ENCODE measurements at regions of chr13 and their contacts with region 1.

Region 1: DNA sequence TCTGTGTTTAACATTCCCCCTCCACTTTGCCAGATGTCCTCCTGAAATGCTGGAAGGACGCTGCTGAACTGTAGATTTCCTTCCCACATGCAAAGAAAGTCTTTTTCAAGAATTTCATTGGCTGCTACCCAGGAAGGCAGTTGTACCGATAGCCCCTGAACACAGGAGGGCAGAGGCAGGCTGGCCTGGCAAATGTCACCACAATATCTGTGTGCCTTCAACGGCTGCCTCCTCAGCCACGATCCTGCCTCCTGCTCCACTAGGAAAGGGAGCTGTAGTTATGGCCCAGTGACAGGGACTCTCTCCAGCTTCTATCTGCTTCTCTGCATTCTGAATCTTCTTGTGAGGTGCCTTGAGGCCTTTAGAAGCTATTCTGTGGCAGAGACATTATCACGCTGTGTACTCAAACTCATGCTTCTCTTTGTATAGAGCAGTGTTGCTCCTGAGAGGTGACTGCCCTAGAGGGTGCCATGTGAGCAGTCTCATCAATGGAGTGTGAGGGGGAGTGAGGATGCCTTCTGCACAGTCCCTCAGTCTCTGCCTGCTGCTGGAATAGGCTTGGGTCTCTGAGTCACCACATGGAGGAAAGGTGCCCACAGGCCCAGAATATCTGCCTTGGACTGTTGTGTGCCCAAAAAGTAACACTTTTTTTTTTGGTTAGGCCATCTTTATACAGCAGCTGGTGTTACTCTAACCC is 279.8 kb downstream of the DNAJC15 start:
- DNase-seq: peak; percentile 72 to 75
- H3K4me3 ChIP-seq: no peak overlapping the region
- H3K4me3 Mint-ChIP-seq: no peak overlapping the region
- H3K27ac Mint-ChIP-seq: no peak overlapping the region
- H3K4me1 ChIP-seq: no peaks in the 10 kb centered on the region
- H3K4me1 Mint-ChIP-seq: peaks cover 22% of the 10 kb centered on the region
- H3K27me3 ChIP-seq: no peaks in the 10 kb centered on the region
- H3K27me3 Mint-ChIP-seq: no peaks in the 10 kb centered on the region
- CTCF ChIP-seq: peak; percentile 59 to 85

Region 2: DNA sequence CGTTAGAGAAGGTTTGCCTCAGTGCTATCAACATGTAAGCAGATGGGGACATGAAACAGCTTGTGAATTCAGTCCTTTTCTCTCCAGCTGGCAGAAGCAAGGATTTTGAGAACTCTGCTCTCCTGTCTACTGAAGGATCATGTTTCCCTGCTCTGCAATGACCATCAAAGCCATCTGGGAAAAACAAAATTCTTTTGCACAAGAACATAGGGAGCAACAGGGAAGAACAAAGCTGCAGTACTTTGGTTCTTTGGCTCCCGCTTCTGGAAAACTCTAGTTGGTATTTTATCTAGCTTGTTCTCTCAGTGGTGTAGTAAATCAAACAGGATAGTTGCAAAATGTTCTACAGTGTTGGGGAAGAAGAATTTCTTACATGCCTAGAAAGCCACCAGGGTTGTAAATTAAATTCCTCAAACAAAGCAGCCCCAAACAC is 213.2 kb after region 1 on chr13:
- CTCF ChIA-PET with region 1: no interaction called
- POLR2A ChIA-PET with region 1: no interaction called
- intact Hi-C with region 1: loop called (anchors 5 kb)
- DNase-seq: peak; percentile 41 to 67
- H3K4me3 ChIP-seq: no peak overlapping the region
- H3K4me3 Mint-ChIP-seq: peak overlapping the region; percentile 24
- H3K27ac Mint-ChIP-seq: peak overlapping the region; percentile 86
- H3K4me1 ChIP-seq: peaks cover 30% of the 10 kb centered on the region
- H3K4me1 Mint-ChIP-seq: peaks cover 30% of the 10 kb centered on the region
- H3K27me3 ChIP-seq: no peaks in the 10 kb centered on the region
- H3K27me3 Mint-ChIP-seq: no peaks in the 10 kb centered on the region
- CTCF ChIP-seq: no peak

Region 3: GRCh38 chr13:43664700-43665191 is 361.6 kb after region 1 on chr13:
- CTCF ChIA-PET with region 1: no interaction called
- POLR2A ChIA-PET with region 1: no interaction called
- intact Hi-C with region 1: loop called (anchors 5 kb)
- DNase-seq: peak; percentile 65 to 72
- H3K4me3 ChIP-seq: no peak overlapping the region
- H3K4me3 Mint-ChIP-seq: no peak overlapping the region
- H3K27ac Mint-ChIP-seq: no peak overlapping the region
- H3K4me1 ChIP-seq: peaks cover 61% of the 10 kb centered on the region
- H3K4me1 Mint-ChIP-seq: peaks cover 38% of the 10 kb centered on the region
- H3K27me3 ChIP-seq: no peaks in the 10 kb centered on the region
- H3K27me3 Mint-ChIP-seq: no peaks in the 10 kb centered on the region
- CTCF ChIP-seq: no peak

Region 4: GRCh38 chr13:43786773-43787517 is 483.8 kb after region 1 on chr13 and contains the start of gene ENOX1:
- CTCF ChIA-PET with region 1: interaction called, 4 read pairs
- POLR2A ChIA-PET with region 1: no interaction called
- intact Hi-C with region 1: loop called (anchors 1 kb)
- DNase-seq: peak; percentile 82 to 84
- H3K4me3 ChIP-seq: peak within 1 kb of the TSS; percentile 84
- H3K4me3 Mint-ChIP-seq: peak within 1 kb of the TSS; percentile 93
- H3K27ac Mint-ChIP-seq: peak within 1 kb of the TSS; percentile 88
- H3K4me1 ChIP-seq: peaks cover 7% of the 10 kb centered on the region; the same call in 1 of the 2 replicates
- H3K4me1 Mint-ChIP-seq: peaks cover 15% of the 10 kb centered on the region
- H3K27me3 ChIP-seq: no peaks in the 10 kb centered on the region
- H3K27me3 Mint-ChIP-seq: no peaks in the 10 kb centered on the region
- CTCF ChIP-seq: peak in 1 of 2 experiments; percentile 22
- total RNA-seq, gene ENOX1: 9.1 and 10.4 TPM in 2 replicates

Region 5: GRCh38 chr13:43878892-43879754 is 575.9 kb after region 1 on chr13 and contains the start of gene CCDC122:
- CTCF ChIA-PET with region 1: no interaction called
- POLR2A ChIA-PET with region 1: no interaction called
- intact Hi-C with region 1: loop called (anchors 5 kb)
- DNase-seq: peak; percentile 83 to 90
- H3K4me3 ChIP-seq: peak within 1 kb of the TSS; percentile 88
- H3K4me3 Mint-ChIP-seq: peak within 1 kb of the TSS; percentile 96
- H3K27ac Mint-ChIP-seq: peak within 1 kb of the TSS; percentile 92
- H3K4me1 ChIP-seq: 0 out of 2 replicates have a peak, but pooled peaks cover 5% of the 10 kb centered on the region
- H3K4me1 Mint-ChIP-seq: peaks cover 13% of the 10 kb centered on the region
- H3K27me3 ChIP-seq: no peaks in the 10 kb centered on the region
- H3K27me3 Mint-ChIP-seq: no peaks in the 10 kb centered on the region
- CTCF ChIP-seq: no peak
- total RNA-seq, gene CCDC122: 15.6 and 21.2 TPM in 2 replicates